OCI-LY7 (cell line): ENCODE measurements at regions of chr10 and their contacts with region 1.

Region 1: DNA sequence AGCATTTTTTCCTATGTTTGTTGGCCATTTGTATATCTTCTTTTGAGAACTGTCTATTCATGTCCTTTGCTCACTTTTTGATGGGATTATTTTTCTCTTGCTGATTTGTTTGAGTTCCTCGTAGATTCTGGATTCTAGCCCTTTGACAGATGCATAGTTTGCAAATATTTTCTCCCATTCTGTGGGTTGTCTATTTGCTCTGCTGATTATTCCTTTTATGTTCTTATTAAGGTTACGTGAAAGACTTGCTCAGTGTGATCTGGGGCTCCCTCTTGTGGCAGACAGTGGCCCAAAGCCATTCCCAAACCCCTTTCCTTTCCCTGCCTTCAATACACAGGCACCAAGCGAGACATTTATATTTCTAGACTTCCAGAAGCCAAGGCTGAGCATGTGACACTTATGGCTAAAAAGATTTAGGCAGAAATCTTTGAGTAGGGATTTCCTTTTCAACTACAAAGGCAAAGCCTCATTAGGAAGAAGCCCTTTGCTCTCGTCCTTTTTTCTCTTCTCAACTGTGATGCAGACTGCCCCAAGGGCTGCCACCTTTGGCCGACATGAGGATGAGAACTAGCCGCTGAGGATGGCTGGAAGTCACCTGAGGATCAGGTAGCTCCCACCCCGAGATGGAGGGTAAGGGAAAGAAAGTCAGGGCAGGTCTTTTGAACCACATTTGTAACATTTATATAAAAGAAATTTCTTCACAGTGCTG is 23.6 kb downstream of the ST8SIA6 start:
- DNase-seq: peak; percentile 40
- H3K4me3 ChIP-seq: no peak overlapping the region
- H3K27ac ChIP-seq: no peak overlapping the region
- H3K4me1 ChIP-seq: no peaks in the 10 kb centered on the region
- CTCF ChIP-seq: peak; percentile 86

Region 2: DNA sequence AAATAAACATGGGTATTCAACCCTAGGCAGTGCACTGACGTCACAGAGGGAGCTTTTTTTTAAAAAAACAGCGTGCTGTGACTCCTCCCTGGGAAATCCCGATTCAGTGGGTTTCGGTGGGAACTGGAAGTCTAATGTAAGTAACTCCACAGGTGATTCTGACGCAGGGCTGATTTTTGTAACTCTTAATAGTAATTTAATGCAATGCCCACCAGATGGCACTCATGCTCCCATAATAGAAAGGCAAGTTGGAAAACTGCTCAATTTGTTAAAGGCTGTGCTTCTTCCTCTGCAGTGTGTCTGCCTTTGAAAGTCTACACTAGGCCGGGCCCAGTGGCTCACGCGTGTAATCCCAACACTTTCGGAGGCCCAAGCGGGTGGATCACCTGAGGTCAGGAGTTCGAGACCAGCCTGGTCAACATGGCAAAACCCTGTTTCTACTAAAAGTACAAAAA is 602.7 kb before region 1 on chr10:
- CTCF ChIA-PET with region 1: no interaction called
- POLR2A ChIA-PET with region 1: interaction called, 3 read pairs
- intact Hi-C with region 1: loop called (anchors 5 kb)
- DNase-seq: peak; percentile 77
- H3K4me3 ChIP-seq: no peak overlapping the region
- H3K27ac ChIP-seq: no peak overlapping the region
- H3K4me1 ChIP-seq: no peaks in the 10 kb centered on the region
- CTCF ChIP-seq: peak; percentile 76

Region 3: GRCh38 chr10:16843252-16843870 is 587.4 kb before region 1 on chr10:
- CTCF ChIA-PET with region 1: no interaction called
- POLR2A ChIA-PET with region 1: no interaction called
- intact Hi-C with region 1: loop called (anchors 2 kb)
- DNase-seq: peak; percentile 80
- H3K4me3 ChIP-seq: no peak overlapping the region
- H3K27ac ChIP-seq: no peak overlapping the region
- H3K4me1 ChIP-seq: no peaks in the 10 kb centered on the region
- CTCF ChIP-seq: peak; percentile 85

Region 4: DNA sequence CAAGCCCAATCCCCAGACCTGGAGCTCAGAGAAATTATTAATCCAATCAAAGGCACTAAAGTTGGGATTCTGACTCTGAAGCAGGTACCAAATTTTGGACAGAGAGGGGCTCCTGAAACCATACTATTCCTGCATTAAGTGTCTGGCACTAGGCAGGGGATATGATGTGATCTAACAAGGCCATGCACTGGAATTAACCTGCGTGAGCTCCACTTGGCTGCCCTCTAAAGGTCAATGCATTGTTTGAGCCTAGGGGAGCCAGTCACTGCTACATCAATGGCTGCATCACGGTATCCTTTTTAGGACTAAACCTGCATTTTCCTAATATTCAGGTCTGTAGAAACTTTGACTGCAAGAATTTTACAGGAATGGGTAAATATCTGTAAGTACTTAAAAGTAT is 18.5 kb before region 1 on chr10:
- CTCF ChIA-PET with region 1: interaction called, 14 read pairs
- POLR2A ChIA-PET with region 1: interaction called, 3 read pairs
- intact Hi-C with region 1: no loop called
- DNase-seq: no peak
- H3K4me3 ChIP-seq: no peak overlapping the region
- H3K27ac ChIP-seq: no peak overlapping the region
- H3K4me1 ChIP-seq: no peaks in the 10 kb centered on the region
- CTCF ChIP-seq: 0 out of 2 replicates have a peak, but pooled peaks have one; percentile 26